Naive thymus-derived CD4-positive, alpha-beta T cell (primary cell): ENCODE measurements at regions of chr4 and their contacts with region 1.

Region 1: DNA sequence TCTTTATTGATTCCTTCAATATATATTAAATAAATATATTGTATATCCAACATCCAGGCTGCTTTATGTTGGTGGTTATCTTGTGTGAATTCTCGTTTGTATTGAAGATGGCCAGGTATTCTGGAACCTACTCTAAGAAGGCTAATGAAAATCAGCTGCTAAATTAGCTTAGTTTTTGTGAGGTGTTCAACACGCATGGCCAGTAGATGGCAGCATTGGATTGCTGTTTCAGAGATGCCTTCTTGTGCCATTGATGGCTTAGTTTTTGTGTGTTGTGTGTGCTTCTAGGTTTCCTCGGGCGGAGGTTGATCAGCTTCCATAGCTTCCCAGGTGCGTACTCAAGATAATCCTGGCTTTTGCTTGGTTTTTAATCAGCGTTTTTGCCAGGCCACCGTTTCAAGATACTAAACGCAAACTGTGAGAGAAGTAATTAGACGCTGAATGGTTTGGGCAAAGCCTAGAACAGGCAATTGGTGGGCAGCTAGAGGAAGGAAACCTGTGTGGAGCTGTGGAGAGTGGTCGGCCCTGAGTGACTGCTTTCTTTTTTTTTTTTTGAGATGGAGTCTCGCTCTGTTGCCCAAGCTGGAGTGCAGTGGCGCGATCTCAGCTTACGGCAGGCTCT is 15.1 kb downstream of the NOCT start:
- DNase-seq: peak; percentile 45 to 81 (median 74)
- ATAC-seq: peak; percentile 86
- H3K4me3 ChIP-seq: no peak overlapping the region
- H3K4me3 Mint-ChIP-seq: peak overlapping the region in 5 of 10 donors; percentile 3 to 58 (median 18)
- H3K27ac ChIP-seq: no peak overlapping the region
- H3K27ac Mint-ChIP-seq: peak overlapping the region in 2 of 9 donors; percentile 0 to 1
- H3K4me1 ChIP-seq: no peaks in the 10 kb centered on the region
- H3K4me1 Mint-ChIP-seq: peaks cover 5 to 20% (median 11%) of the 10 kb centered on the region in 7 donors
- H3K27me3 ChIP-seq: no peaks in the 10 kb centered on the region
- H3K27me3 Mint-ChIP-seq: no peaks in the 10 kb centered on the region

Region 2: DNA sequence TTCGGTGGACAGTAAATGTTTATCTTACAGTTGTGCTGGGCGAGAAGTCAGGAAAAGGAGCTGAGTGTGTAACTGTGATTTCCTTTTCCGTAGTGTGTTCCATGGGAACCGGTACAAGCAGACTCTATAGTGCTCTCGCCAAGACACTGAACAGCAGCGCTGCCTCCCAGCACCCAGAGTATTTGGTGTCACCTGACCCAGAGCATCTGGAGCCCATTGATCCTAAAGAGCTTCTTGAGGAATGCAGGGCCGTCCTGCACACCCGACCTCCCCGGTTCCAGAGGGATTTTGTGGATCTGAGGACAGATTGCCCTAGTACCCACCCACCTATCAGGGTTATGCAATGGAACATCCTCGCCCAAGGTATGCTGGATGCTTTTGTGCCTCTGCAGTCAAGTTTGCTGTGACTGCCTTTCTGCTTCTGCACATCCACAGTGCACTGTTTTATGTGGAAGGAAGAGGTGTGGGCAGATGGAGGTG is 12.3 kb after region 1 on chr4:
- CTCF ChIA-PET with region 1: interaction called, 14 read pairs
- POLR2A ChIA-PET with region 1: interaction called, 3 read pairs
- intact Hi-C with region 1: no loop called
- DNase-seq: no peak
- ATAC-seq: peak; percentile 3
- H3K4me3 ChIP-seq: no peak overlapping the region
- H3K4me3 Mint-ChIP-seq: no peak overlapping the region
- H3K27ac ChIP-seq: no peak overlapping the region
- H3K27ac Mint-ChIP-seq: peak overlapping the region in 4 of 9 donors; percentile 18 to 83 (median 46)
- H3K4me1 ChIP-seq: no peaks in the 10 kb centered on the region
- H3K4me1 Mint-ChIP-seq: peaks cover 1 to 28% (median 11%) of the 10 kb centered on the region in 7 donors
- H3K27me3 ChIP-seq: no peaks in the 10 kb centered on the region
- H3K27me3 Mint-ChIP-seq: no peaks in the 10 kb centered on the region

Region 3: DNA sequence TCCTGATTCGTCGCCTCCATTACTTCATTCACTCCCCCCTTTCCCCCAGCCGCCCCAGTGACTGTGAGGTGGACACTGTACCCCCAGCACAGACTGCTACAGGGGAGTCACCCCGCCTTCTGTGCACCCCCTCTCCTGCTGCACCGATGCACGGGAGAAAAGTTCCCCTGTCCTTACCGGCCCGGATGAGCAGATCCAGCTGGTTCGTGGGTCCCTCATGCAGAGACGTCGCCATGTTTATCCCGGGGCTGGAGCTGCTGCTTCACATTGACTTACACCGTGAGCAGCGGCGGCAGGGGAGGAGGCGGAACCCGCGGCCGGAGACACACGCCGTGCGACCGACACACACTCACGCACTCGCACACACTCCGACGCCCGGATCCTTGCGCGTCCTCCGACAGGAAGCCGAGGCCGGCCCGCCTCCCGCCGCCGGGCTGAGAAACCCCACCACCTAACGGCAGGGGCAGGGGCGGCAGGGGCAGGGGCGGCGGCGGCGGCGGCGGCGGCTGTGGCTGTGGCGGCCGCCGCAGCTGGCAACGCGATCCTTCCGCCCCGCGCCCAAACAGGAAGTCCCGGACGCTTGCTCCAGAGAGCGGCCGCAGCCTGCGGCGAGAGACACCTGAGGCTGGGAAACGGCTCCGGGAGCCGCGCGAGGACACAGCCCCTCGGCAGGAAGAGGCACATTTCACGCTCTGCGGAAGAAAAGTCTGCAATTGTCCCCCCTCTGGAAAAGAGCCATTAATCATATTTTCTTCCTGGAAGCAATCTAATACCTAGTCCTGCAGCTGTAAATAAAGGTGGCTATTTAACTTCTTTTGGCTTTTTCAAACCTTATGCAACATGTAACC is 53.5 kb after region 1 on chr4:
- CTCF ChIA-PET with region 1: interaction called, 18 read pairs
- POLR2A ChIA-PET with region 1: interaction called, 5 read pairs
- intact Hi-C with region 1: loop called (anchors 1 kb)
- DNase-seq: peak; percentile 54 to 88 (median 84)
- ATAC-seq: peak; percentile 64
- H3K4me3 ChIP-seq: peak overlapping the region; percentile 99
- H3K4me3 Mint-ChIP-seq: peak overlapping the region; percentile 90 to 100 (median 92)
- H3K27ac ChIP-seq: peak overlapping the region; percentile 96
- H3K27ac Mint-ChIP-seq: peak overlapping the region; percentile 85 to 100 (median 96)
- H3K4me1 ChIP-seq: peaks cover 16 to 27% of the 10 kb centered on the region in 2 donors
- H3K4me1 Mint-ChIP-seq: peaks cover 16 to 49% (median 41%) of the 10 kb centered on the region in 7 donors
- H3K27me3 ChIP-seq: no peaks in the 10 kb centered on the region
- H3K27me3 Mint-ChIP-seq: no peaks in the 10 kb centered on the region

Region 4: GRCh38 chr4:139229534-139230039 is 198.9 kb after region 1 on chr4:
- CTCF ChIA-PET with region 1: interaction called, 8 read pairs
- POLR2A ChIA-PET with region 1: no interaction called
- intact Hi-C with region 1: loop called (anchors 1 kb)
- DNase-seq: peak in 7 of 9 donors; percentile 11 to 58 (median 37)
- ATAC-seq: peak; percentile 84
- H3K4me3 ChIP-seq: no peak overlapping the region
- H3K4me3 Mint-ChIP-seq: no peak overlapping the region
- H3K27ac ChIP-seq: no peak overlapping the region
- H3K27ac Mint-ChIP-seq: no peak overlapping the region
- H3K4me1 ChIP-seq: no peaks in the 10 kb centered on the region
- H3K4me1 Mint-ChIP-seq: peaks cover 0 to 7% (median 4%) of the 10 kb centered on the region in 7 donors
- H3K27me3 ChIP-seq: no peaks in the 10 kb centered on the region
- H3K27me3 Mint-ChIP-seq: no peaks in the 10 kb centered on the region

Region 5: DNA sequence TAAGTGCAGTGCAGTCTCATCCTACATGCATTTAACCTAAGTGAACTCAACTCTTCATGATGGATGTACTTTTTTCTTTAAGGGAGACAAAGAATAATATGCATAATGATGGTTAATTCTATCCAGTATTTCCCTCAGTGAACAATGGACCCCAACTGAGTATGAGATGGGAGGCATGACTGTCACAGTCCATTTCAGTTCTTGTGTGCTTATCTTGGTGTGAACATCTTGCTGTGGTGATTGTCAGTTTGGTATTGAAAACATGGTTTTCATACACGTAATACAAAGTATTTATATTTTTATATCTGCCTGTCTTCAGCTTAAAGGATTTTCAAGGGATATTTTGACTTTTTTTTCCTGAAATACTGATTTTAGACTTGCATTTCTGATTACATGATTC is 343.5 kb after region 1 on chr4:
- CTCF ChIA-PET with region 1: interaction called, 4 read pairs
- POLR2A ChIA-PET with region 1: no interaction called
- intact Hi-C with region 1: loop called in 1 of 2 experiments (anchors 10 kb)
- DNase-seq: no peak
- ATAC-seq: no peak
- H3K4me3 ChIP-seq: no peak overlapping the region
- H3K4me3 Mint-ChIP-seq: no peak overlapping the region
- H3K27ac ChIP-seq: no peak overlapping the region
- H3K27ac Mint-ChIP-seq: peak overlapping the region in 1 of 9 donors; percentile 36
- H3K4me1 ChIP-seq: no peaks in the 10 kb centered on the region
- H3K4me1 Mint-ChIP-seq: peaks cover 0 to 13% (median 0%) of the 10 kb centered on the region in 7 donors
- H3K27me3 ChIP-seq: no peaks in the 10 kb centered on the region
- H3K27me3 Mint-ChIP-seq: no peaks in the 10 kb centered on the region

Region 6: DNA sequence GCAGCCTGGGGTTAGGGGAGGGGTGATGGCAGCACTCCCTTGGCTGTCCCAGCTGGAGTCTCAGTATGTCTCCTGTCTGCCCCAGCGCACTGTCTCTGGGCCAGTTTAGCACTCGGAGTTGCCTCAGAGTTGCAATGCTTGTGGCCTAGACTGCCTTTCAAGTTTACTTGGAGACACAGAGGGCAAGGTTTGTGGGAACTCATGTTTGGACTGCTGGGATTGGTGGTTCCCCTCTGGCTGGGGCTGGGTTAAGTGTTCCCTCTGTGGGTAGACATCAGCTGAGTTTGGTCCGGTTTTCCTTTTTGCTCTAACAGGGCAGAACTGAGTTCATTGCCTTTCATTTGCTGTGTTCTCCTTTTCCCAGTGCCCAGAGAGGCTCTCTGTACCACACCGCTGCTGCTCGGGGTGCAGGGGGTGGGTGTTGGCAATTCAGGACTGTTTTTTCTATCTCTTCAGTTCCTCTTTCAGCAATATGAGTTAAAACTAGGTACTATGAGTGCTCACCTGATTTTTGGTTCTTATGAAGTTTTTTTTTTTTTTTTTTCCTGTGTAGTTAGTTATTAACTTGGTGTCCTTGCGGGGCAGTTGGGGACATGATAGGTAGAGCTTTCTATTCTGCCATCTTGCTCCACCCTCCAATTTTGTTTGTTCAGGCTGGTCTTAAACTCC is 440.4 kb after region 1 on chr4:
- CTCF ChIA-PET with region 1: no interaction called
- POLR2A ChIA-PET with region 1: no interaction called
- intact Hi-C with region 1: no loop called
- DNase-seq: no peak
- ATAC-seq: no peak
- H3K4me3 ChIP-seq: no peak overlapping the region
- H3K4me3 Mint-ChIP-seq: peak overlapping the region in 1 of 10 donors; percentile 16
- H3K27ac ChIP-seq: no peak overlapping the region
- H3K27ac Mint-ChIP-seq: peak overlapping the region in 1 of 9 donors; percentile 4
- H3K4me1 ChIP-seq: no peaks in the 10 kb centered on the region
- H3K4me1 Mint-ChIP-seq: peaks cover 0 to 27% (median 22%) of the 10 kb centered on the region in 7 donors
- H3K27me3 ChIP-seq: no peaks in the 10 kb centered on the region
- H3K27me3 Mint-ChIP-seq: no peaks in the 10 kb centered on the region

Region 7: GRCh38 chr4:139530833-139531427 is 500.2 kb after region 1 on chr4:
- CTCF ChIA-PET with region 1: interaction called, 7 read pairs
- POLR2A ChIA-PET with region 1: no interaction called
- intact Hi-C with region 1: loop called (anchors 1 to 5 kb)
- DNase-seq: peak; percentile 29 to 63 (median 50)
- ATAC-seq: peak; percentile 79
- H3K4me3 ChIP-seq: no peak overlapping the region
- H3K4me3 Mint-ChIP-seq: no peak overlapping the region
- H3K27ac ChIP-seq: no peak overlapping the region
- H3K27ac Mint-ChIP-seq: no peak overlapping the region
- H3K4me1 ChIP-seq: peaks cover 0 to 14% of the 10 kb centered on the region in 2 donors
- H3K4me1 Mint-ChIP-seq: peaks cover 0 to 10% (median 0%) of the 10 kb centered on the region in 7 donors
- H3K27me3 ChIP-seq: no peaks in the 10 kb centered on the region
- H3K27me3 Mint-ChIP-seq: no peaks in the 10 kb centered on the region